Activated CD8-positive, alpha-beta T cell treated with anti-CD3 and anti-CD28 coated beads, Interleukin-2, amount 10 ng/mL, durations not matched to agents 7 days and 5 days (primary cell): ENCODE measurements at regions of chr2 and their contacts with region 1.

Region 1: DNA sequence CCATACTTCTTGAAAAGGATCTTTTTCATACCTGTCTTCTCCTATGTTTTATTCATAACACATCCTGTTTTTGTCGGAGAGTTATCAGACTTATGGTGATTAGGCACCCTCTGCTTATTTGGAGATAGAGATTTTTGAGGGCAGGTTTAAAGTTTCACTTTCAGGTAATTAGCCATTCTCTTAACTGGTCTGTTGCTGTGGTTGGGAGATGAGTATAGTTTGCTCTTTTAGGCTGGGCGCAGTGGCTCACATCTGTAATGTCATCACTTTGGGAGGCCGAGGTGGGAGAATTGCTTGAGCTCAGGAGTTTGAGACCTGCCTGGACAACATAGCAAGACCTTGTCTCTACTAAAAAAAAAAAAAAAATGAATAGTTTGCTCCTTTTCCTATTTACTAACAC is 25.3 kb downstream of the SFTPB start:
- DNase-seq: no peak
- ATAC-seq: no peak
- H3K4me3 Mint-ChIP-seq: no peak overlapping the region
- H3K27ac Mint-ChIP-seq: peak overlapping the region; percentile 66
- H3K4me1 Mint-ChIP-seq: peaks cover 23% of the 10 kb centered on the region
- H3K27me3 Mint-ChIP-seq: no peaks in the 10 kb centered on the region

Region 2: DNA sequence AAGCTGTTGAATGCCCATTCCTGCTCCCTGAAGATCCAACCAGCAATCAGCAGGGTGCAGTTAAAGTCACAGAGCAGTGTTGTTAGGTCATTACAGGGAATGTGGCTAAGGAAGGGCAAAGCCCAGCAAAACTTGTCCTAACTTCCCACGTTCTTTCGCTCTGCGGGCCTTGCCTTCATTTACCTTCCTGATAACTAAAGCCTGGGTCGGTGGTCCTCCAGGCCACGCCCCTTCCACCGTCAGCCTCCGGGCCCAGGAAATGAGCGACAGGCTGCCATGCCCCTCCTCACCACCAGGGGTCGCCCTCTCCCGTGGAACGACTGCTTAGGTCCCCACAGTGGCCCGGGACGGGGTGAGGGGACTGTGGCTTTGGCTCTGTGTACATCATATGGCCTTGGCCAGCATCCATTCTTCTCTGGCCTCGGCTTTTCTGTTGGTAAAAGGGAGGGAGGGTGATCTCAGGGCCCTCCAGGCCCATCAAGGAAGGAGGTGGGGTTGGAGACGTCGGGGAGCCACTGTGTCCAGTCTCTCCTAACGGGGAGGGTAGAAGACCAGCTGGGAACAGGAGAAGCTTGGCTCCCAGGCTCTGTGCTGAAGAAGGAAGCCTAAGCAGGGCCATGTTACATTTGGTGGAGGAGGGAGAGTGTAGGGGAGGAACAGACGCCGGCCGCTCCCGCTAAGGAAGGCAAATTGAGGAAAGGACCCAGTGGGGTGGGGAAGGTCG is 222.0 kb before region 1 on chr2:
- CTCF ChIA-PET with region 1: interaction called, 15 read pairs
- POLR2A ChIA-PET with region 1: no interaction called
- DNase-seq: peak; percentile 92
- ATAC-seq: peak; percentile 69
- H3K4me3 Mint-ChIP-seq: peak overlapping the region; percentile 69
- H3K27ac Mint-ChIP-seq: peak overlapping the region; percentile 89
- H3K4me1 Mint-ChIP-seq: peaks cover 42% of the 10 kb centered on the region
- H3K27me3 Mint-ChIP-seq: no peaks in the 10 kb centered on the region

Region 3: DNA sequence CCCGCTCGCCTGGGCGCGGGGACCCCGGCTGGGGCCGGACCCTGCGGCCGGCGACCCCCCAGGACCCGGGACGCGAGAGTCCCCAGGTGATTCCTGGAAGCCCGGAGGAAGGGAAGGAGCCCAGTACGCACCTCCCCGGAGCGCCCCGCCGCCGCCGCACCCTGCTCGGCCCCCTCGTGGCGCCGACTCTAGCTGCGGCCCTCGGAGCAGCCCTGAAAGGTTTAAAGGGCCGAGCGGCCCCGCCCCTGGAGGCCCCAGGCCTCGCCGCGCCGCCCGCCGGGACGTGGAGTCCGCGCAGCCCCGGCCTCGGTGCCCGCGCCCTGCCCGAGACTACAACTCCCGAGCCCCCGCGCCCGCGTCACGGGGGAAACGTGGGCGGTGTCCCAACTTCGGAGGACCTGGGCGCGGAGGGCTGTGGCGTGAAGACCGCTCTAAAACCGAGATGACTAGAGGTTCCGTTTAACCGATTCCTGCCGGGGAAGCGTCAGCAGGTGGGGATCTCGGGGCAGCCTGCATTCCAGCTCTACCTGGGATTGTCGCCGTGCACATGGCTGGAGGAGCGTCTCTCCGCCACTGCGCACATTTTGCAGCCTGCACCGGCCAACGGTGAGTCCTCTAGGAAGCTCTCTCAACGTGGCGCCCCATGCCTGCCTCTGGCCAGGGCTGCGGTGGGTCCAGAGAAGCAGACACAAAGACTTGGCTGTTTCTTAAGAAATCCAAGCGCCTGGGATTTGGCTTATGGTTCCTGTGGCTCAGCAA is 40.1 kb before region 1 on chr2 and contains the start of gene TMEM150A:
- CTCF ChIA-PET with region 1: interaction called, 15 read pairs
- POLR2A ChIA-PET with region 1: no interaction called
- DNase-seq: peak; percentile 87
- ATAC-seq: peak; percentile 97
- H3K4me3 Mint-ChIP-seq: peak within 1 kb of the TSS; percentile 79
- H3K27ac Mint-ChIP-seq: peak within 1 kb of the TSS; percentile 53
- H3K4me1 Mint-ChIP-seq: peaks cover 15% of the 10 kb centered on the region
- H3K27me3 Mint-ChIP-seq: no peaks in the 10 kb centered on the region
- total RNA-seq, gene TMEM150A: 1.7 to 1.9 TPM

Region 4: DNA sequence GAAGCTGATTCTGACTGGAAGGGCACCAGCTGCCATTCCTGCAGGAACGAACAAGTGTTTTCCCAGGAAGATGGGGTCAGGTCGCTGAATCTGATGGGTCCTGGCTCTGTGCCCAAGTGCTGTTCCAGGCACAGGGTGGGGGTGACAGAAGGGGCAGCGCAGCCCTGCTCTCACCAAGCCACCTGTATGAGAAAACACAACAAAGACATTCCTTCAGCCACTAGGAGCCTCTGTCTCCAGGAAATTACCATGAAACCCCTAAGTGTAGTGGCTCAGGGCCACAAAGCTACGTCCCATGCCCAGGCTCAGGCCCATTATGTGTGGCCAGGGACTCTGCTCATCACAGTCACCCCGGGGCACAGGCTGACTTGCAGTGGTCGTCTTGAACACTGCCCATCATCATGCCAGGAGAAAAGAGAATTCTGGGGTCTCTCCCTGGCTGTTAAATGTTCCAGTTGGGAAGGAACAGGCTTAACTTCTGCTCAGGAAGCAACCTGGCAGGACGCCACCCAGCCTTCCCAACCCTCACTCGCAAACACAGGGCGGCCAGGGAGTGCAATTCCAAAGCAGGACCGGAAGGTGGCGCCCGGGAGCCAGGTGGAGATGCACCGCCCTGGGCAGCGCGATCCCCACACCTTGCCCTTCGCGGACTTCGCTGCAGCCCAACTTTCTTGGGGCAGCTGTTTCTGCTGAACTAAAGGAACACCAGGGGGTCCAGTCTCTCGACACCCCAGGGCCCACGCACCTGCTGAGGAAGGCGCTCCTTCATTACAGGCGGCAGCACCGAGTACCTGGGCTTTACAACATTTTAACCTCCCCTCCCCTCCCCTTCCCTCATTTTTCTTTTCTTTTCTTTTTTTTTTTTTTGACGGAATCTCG is 36.3 kb after region 1 on chr2:
- CTCF ChIA-PET with region 1: interaction called, 17 read pairs
- POLR2A ChIA-PET with region 1: no interaction called
- DNase-seq: peak; percentile 84
- ATAC-seq: peak; percentile 91
- H3K4me3 Mint-ChIP-seq: no peak overlapping the region
- H3K27ac Mint-ChIP-seq: no peak overlapping the region
- H3K4me1 Mint-ChIP-seq: peaks cover 26% of the 10 kb centered on the region
- H3K27me3 Mint-ChIP-seq: peaks cover 3% of the 10 kb centered on the region

Region 5: DNA sequence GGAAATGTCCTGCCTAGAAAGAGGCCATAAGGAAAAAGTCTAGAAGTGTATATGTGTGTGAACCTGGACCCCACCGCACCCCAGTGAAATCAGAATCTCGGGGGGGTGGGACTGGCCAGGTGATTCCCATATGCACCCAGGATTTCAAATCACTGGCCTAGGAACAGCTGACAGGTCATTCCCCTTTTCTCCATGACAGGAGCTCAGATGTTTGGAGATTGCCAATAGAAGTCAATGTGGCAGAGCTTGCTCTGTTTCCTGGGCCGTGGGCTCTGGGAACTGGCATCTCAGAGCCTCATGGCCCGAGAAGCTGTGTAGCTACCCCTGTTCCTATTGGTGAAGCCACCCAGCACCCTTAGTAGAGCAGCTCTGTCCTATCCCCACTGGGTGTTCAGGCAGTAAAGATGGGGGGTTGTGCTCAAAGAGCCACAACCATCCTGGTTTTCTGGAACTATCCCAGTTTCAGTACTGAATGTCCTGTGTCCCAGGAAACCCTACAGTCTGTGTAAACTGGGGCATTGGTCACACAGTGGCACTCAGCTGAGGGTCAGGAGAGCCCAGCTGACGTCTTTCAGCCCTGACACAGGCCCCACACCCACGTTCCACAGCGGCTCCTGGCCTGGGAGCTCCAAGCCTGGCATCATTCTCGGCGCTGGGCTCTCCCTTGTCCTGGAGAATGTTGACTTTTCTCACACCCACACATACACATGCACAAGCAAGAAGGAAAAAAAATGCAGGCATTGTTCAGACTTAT is 70.3 kb after region 1 on chr2:
- CTCF ChIA-PET with region 1: interaction called, 70 read pairs
- POLR2A ChIA-PET with region 1: no interaction called
- DNase-seq: no peak
- ATAC-seq: no peak
- H3K4me3 Mint-ChIP-seq: no peak overlapping the region
- H3K27ac Mint-ChIP-seq: no peak overlapping the region
- H3K4me1 Mint-ChIP-seq: peaks cover 44% of the 10 kb centered on the region
- H3K27me3 Mint-ChIP-seq: peaks cover 11% of the 10 kb centered on the region

Region 6: DNA sequence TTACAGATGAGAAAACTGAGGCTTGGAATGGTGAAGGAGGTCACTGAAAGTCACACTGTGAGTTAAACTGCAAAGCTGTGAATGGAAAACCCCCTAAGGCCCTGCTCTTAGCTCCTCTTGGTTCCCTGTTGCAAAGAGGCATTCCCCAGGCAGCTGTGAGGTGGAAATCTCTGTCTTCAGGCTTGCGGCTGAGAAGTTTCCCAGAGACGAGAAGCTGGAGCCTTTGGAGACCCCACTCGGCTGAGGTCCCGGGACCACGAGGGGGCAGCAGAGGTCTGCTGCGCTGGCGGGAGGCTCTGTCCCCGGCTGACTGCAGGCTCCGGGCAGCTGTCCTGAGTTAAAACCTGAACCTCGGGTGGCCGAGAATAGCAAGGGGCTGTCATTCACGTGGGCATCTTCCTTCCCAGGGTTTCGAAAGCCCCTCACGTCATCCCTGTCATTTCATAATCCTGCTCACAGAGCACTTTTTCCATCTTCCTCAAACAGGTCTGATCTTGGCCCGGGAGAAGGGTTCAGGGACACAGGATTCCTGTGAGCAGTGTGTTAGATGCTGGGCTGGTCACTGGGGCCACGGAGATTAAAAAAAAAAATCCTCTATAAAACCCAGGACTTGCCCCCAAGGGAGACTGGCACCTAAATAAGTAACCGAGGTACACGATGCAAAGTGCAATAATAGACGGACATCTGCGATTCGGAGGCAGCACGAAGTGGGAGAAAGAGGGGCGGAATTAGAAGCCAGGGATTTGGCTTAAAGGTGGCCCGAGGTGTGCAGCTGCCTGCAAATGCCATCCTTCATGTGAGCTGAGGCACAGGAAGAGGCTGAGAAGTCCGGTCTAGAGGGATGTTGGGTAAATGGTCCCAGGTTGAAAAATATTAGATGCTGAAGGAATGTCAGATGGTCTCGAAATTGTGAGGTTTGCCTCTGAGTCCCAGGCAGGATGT is 86.4 kb after region 1 on chr2:
- CTCF ChIA-PET with region 1: interaction called, 18 read pairs
- POLR2A ChIA-PET with region 1: interaction called, 3 read pairs
- DNase-seq: peak; percentile 80
- ATAC-seq: peak; percentile 93
- H3K4me3 Mint-ChIP-seq: no peak overlapping the region
- H3K27ac Mint-ChIP-seq: no peak overlapping the region
- H3K4me1 Mint-ChIP-seq: peaks cover 9% of the 10 kb centered on the region
- H3K27me3 Mint-ChIP-seq: peaks cover 23% of the 10 kb centered on the region

Region 7: DNA sequence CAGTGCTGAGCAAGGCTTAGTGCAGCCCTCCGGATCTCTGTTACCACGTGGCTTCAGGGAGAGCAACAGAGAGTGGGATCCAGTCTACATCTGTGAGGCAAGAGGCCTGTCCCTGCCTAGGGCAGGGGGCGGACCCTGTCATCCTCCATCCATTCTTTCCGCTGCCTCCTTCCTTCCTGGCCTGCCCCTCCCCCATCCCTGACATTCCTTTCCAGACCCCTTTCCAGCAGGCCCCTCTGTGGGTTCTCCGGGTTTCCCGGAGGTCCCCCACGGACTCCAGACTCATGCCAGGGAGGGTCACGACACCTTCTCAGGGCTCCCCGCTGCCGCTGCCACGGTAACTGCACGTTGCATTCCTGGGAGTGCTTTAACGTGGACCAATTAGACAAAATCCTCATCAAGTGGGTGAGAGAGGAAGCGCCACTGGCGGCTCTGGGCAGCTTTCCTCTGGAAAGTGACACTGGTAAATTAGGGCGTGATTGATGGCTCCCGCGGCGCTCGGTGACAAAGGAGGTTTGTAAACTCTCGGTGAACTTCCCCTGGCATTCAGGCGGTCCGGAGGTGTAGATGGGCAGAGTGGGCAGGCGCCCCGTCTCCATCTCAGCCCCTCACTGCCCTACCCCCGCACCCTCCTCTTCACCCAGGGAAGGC is 122.5 kb after region 1 on chr2:
- CTCF ChIA-PET with region 1: no interaction called
- POLR2A ChIA-PET with region 1: no interaction called
- DNase-seq: no peak
- ATAC-seq: no peak
- H3K4me3 Mint-ChIP-seq: no peak overlapping the region
- H3K27ac Mint-ChIP-seq: no peak overlapping the region
- H3K4me1 Mint-ChIP-seq: no peaks in the 10 kb centered on the region
- H3K27me3 Mint-ChIP-seq: peaks cover 41% of the 10 kb centered on the region

Region 8: DNA sequence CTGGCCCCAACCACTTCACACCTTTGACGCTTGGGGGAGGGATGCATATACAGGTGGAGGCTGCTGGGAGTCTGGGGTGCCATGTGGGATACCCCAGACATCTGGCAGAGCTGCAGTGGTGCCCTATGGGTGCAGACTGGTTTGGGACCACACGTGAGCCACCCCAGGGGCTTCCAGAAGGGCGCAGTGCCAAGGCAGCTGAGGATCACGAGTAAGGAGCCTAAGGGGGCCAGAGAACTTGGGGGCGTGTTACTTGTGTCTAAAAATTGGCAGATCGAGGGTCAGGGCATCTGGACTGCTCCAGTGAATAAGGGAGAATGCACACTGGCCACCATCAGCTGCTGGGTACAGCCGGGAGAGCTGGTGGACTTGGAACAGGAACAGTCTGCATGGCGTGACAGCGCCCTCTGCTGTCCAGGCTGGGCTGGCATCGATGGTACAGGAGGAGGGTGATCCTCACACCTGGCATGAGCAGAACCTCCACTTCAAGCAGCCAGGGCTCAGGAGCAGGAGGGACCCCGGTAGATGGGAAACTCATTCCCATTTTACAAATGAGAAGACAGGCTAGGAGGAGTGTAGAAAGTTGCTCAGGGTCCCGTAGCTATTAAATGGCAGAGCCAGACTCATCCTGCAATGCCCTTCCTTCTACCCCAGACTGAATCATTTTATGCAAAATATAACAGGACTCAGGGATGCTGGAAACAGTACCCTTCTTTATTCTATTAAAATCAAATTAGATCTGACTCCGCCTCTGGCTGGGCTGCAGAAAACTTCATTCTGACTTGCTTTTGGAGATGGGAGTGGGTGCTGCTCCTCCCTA is 171.5 kb after region 1 on chr2:
- CTCF ChIA-PET with region 1: interaction called, 16 read pairs
- POLR2A ChIA-PET with region 1: no interaction called
- DNase-seq: peak; percentile 89
- ATAC-seq: peak; percentile 95
- H3K4me3 Mint-ChIP-seq: no peak overlapping the region
- H3K27ac Mint-ChIP-seq: no peak overlapping the region
- H3K4me1 Mint-ChIP-seq: no peaks in the 10 kb centered on the region
- H3K27me3 Mint-ChIP-seq: peaks cover 15% of the 10 kb centered on the region